Natural killer cell (primary cell): ENCODE measurements at regions of chr19 and their contacts with region 1.

Region 1: GRCh38 chr19:5719961-5720790 is at the starts of genes CATSPERD and LONP1:
- DNase-seq: peak; percentile 96 to 100
- ATAC-seq: peak; percentile 87 to 96 (median 87)
- H3K4me3 ChIP-seq: peak within 1 kb of the TSS; percentile 68
- H3K4me3 Mint-ChIP-seq: peak within 1 kb of the TSS; percentile 89
- H3K27ac ChIP-seq: peak within 1 kb of the TSS; percentile 82
- H3K27ac Mint-ChIP-seq: peak within 1 kb of the TSS; percentile 92 to 95
- H3K4me1 ChIP-seq: peaks cover 31% of the 10 kb centered on the region
- H3K4me1 Mint-ChIP-seq: peaks cover 10 to 23% of the 10 kb centered on the region in 2 donors
- H3K27me3 ChIP-seq: no peaks in the 10 kb centered on the region
- H3K27me3 Mint-ChIP-seq: peaks cover 0 to 2% of the 10 kb centered on the region in 2 donors
- CTCF ChIP-seq: peak; percentile 67
- total RNA-seq, gene CATSPERD: not detected
- total RNA-seq, gene LONP1: 50.5 to 61.8 (median 56.1) TPM

Region 2: DNA sequence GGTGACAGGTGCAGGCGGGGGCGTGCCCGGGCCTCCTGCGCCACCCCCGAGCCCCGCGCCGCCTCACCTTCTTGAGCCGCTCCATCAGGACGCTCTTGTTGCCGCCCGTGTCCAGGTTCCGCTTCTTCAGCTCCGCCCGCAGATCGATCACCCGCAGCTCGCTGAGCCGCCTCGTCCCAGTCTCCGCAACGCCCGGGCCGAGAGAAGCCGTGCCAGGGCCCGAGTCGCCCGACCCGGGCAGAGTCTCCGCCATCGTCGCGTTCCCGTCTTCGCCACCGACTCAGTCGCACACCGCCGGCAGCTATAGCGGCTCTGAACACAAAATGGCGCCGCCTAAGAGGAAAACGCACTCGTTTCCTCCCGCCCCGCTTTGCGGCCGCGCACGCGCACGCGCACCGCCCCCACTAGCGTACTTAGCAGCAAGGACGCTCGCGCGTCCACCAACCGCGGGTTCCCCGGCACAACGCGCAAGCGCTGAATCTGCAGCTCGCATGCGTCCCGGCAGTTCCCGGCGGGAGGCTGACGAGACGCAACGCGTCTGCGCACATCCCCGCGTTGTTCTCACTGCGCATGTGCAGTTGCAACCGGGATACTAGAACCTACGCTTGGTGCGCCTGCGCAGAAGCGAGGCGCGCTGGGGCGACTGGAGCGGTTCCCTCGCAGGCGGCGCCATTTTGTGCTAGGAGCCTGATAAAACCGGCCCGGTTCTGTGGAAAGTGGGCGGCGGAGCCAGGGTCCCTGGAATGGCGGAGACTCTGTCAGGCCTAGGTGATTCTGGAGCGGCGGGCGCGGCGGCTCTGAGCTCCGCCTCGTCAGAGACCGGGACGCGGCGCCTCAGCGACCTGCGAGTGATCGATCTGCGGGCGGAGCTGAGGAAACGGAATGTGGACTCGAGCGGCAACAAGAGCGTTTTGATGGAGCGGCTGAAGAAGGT is 97.4 kb before region 1 on chr19 and contains the starts of genes SAFB and SAFB2:
- intact Hi-C with region 1: loop called (anchors 1 kb)
- DNase-seq: peak; percentile 99 to 100
- ATAC-seq: peak; percentile 85 to 92 (median 85)
- H3K4me3 ChIP-seq: peak within 1 kb of the TSS; percentile 99
- H3K4me3 Mint-ChIP-seq: peak within 1 kb of the TSS; percentile 99
- H3K27ac ChIP-seq: peak within 1 kb of the TSS; percentile 99
- H3K27ac Mint-ChIP-seq: peak within 1 kb of the TSS; percentile 99 to 100
- H3K4me1 ChIP-seq: peaks cover 66% of the 10 kb centered on the region
- H3K4me1 Mint-ChIP-seq: peaks cover 83% of the 10 kb centered on the region in 2 donors
- H3K27me3 ChIP-seq: no peaks in the 10 kb centered on the region
- H3K27me3 Mint-ChIP-seq: no peaks in the 10 kb centered on the region
- CTCF ChIP-seq: no peak
- total RNA-seq, gene SAFB: 195 to 229 (median 207) TPM
- total RNA-seq, gene SAFB2: 232 to 264 (median 258) TPM

Region 3: GRCh38 chr19:5680437-5681368 is 39.5 kb before region 1 on chr19 and contains the starts of genes HSD11B1L and MICOS13:
- intact Hi-C with region 1: loop called (anchors 1 kb)
- DNase-seq: peak; percentile 99 to 100
- ATAC-seq: peak; percentile 92 to 97 (median 92)
- H3K4me3 ChIP-seq: peak within 1 kb of the TSS; percentile 95
- H3K4me3 Mint-ChIP-seq: peak within 1 kb of the TSS; percentile 98
- H3K27ac ChIP-seq: peak within 1 kb of the TSS; percentile 97
- H3K27ac Mint-ChIP-seq: peak within 1 kb of the TSS; percentile 99 to 100
- H3K4me1 ChIP-seq: peaks cover 17% of the 10 kb centered on the region
- H3K4me1 Mint-ChIP-seq: peaks cover 15 to 38% of the 10 kb centered on the region in 2 donors
- H3K27me3 ChIP-seq: no peaks in the 10 kb centered on the region
- H3K27me3 Mint-ChIP-seq: no peaks in the 10 kb centered on the region
- CTCF ChIP-seq: no peak
- total RNA-seq, gene HSD11B1L: 1.1 to 3.7 (median 3.0) TPM
- total RNA-seq, gene MICOS13: 17.7 to 27.7 (median 25.1) TPM

Region 4: DNA sequence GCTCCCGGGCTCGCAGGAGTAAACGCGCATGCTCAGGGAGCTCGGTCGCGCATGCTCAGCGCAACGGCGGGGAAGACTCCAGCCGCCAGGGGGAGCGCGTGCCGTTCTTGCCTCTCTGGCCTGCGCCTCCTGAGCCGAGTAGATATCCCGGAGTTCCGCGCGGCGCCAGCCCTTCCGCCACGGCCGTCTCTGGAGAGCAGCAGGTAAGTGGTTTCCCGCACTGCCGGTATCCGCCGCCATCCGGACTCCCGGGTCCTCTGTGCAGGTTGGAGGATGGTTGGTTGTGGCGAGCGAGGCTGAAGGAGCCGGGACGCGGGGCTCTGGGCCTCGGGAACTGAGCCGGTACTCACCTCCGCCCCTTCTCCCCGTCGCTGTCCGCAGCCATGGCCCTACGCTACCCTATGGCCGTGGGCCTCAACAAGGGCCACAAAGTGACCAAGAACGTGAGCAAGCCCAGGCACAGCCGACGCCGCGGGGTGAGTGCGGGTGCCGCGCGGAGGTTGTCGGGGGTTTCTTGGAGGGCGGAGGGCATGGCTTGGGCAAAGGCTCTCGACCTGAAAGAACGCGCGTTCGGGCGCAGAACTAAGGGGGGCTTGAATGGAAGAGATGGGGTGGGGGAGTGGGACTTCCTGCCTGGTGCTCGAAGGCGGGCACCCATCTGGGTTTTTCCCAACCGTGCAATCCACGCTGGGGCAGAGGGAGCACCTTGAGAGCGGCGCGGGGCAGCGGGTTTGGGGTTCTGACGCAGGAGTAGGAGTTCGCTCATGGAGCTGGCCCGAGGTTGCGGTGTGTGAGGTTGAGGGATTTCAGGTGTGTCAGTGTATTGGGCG is 29.8 kb before region 1 on chr19 and contains the start of gene RPL36:
- intact Hi-C with region 1: loop called (anchors 1 kb)
- DNase-seq: peak; percentile 99
- ATAC-seq: peak; percentile 61 to 81 (median 65)
- H3K4me3 ChIP-seq: peak within 1 kb of the TSS; percentile 91
- H3K4me3 Mint-ChIP-seq: peak within 1 kb of the TSS; percentile 94
- H3K27ac ChIP-seq: peak within 1 kb of the TSS; percentile 83
- H3K27ac Mint-ChIP-seq: peak within 1 kb of the TSS; percentile 90 to 97
- H3K4me1 ChIP-seq: peaks cover 39% of the 10 kb centered on the region
- H3K4me1 Mint-ChIP-seq: peaks cover 13 to 49% of the 10 kb centered on the region in 2 donors
- H3K27me3 ChIP-seq: no peaks in the 10 kb centered on the region
- H3K27me3 Mint-ChIP-seq: no peaks in the 10 kb centered on the region
- CTCF ChIP-seq: peak; percentile 96
- total RNA-seq, gene RPL36: 363 to 505 (median 459) TPM

Region 5: DNA sequence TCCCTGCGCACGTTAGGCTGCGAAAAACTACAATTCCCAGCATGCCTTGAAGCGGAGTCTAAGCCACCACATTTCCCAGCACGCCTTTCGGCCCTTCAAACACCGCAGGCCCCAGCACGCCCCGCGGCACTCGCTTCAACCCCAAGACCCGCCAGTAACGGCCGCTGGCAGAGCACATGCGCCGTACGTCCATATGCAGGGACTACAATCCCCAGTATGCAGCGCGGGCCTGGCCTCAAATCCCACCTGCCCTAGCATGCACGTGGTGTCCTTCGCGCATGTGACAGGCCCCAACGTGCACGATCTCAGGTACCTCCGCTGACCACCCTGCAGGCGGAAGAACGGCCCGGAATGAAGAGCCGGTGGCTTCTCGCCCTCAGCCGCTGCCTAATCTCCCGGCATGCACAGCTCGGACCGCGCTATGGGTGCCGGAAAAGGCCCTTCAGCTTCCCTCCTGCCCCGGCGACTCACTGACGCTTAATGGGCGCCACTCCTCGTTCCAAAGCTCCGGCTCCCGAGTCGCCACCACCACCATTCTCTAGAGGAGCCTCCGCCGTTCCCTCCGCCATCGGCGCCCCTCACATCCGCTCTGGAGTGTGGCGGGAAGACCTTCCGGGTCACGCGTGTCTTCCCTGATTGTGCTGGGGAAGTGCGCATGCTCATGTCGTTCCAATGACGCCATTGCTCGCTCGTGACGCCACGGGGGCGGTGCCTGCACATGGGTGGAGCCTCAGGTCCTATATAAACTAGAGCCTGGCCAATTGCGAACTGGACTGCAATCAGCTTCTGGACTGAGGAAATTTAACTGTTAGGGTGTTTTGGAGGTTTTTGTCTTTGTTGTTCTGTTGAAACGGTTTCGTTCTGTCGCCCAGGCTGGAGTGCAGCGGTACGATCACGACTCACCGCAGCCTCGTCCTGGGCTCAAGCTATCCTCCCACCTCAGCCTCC is 70.7 kb after region 1 on chr19 and contains the start of gene DUS3L:
- intact Hi-C with region 1: loop called (anchors 2 kb)
- DNase-seq: peak; percentile 95 to 98
- ATAC-seq: peak; percentile 90 to 98 (median 92)
- H3K4me3 ChIP-seq: peak within 1 kb of the TSS; percentile 96
- H3K4me3 Mint-ChIP-seq: peak within 1 kb of the TSS; percentile 100
- H3K27ac ChIP-seq: peak within 1 kb of the TSS; percentile 99
- H3K27ac Mint-ChIP-seq: peak within 1 kb of the TSS; percentile 100
- H3K4me1 ChIP-seq: peaks cover 18% of the 10 kb centered on the region
- H3K4me1 Mint-ChIP-seq: peaks cover 14 to 22% of the 10 kb centered on the region in 2 donors
- H3K27me3 ChIP-seq: no peaks in the 10 kb centered on the region
- H3K27me3 Mint-ChIP-seq: peaks cover 0 to 3% of the 10 kb centered on the region in 2 donors
- CTCF ChIP-seq: no peak
- total RNA-seq, gene DUS3L: 116 to 140 (median 128) TPM